ENCODE measurements at regions of chr2 and their contacts with region 1.

Region 1: GRCh38 chr2:101463891-101464641 is 10.8 kb downstream of the RFX8 start:
- DNase-seq: peak in 1 of 2 donors; percentile 66
- H3K4me3 ChIP-seq: no peak overlapping the region
- H3K27ac ChIP-seq: peak overlapping the region; percentile 18 to 56
- H3K4me1 ChIP-seq: peaks cover 0 to 14% of the 10 kb centered on the region in 2 donors
- H3K27me3 ChIP-seq: no peaks in the 10 kb centered on the region
- CTCF ChIP-seq: no peak

Region 2: DNA sequence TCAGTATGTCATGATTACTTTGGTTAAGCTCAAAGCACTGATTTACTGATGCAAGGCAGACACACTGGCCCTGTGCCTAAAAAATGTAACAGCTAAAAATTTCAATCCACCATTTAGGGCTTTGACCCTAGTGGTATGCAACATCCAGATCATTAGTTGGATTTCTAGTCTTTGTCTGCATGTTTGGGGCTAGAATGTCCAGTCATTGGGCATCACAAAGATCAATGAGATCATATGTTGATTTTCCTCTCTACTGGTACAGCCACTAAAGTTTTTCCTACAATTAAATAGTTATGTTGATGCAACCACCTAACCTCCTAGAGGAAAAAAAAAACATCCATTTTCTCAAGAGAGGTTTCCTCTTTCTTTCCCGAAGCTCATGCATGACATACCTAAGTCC is 1920.8 kb before region 1 on chr2:
- intact Hi-C with region 1: no loop called
- DNase-seq: no peak
- H3K4me3 ChIP-seq: no peak overlapping the region
- H3K27ac ChIP-seq: no peak overlapping the region
- H3K4me1 ChIP-seq: peaks cover 0 to 3% of the 10 kb centered on the region in 2 donors
- H3K27me3 ChIP-seq: no peaks in the 10 kb centered on the region
- CTCF ChIP-seq: no peak

Region 3: GRCh38 chr2:101360229-101360628 is 103.8 kb before region 1 on chr2:
- intact Hi-C with region 1: no loop called
- DNase-seq: peak in 1 of 2 donors; percentile 13
- H3K4me3 ChIP-seq: no peak overlapping the region
- H3K27ac ChIP-seq: no peak overlapping the region
- H3K4me1 ChIP-seq: no peaks in the 10 kb centered on the region
- H3K27me3 ChIP-seq: no peaks in the 10 kb centered on the region
- CTCF ChIP-seq: no peak

Region 4: GRCh38 chr2:101428422-101429176 is 35.5 kb before region 1 on chr2:
- intact Hi-C with region 1: loop called (anchors 5 kb)
- DNase-seq: no peak
- H3K4me3 ChIP-seq: no peak overlapping the region
- H3K27ac ChIP-seq: no peak overlapping the region
- H3K4me1 ChIP-seq: no peaks in the 10 kb centered on the region
- H3K27me3 ChIP-seq: no peaks in the 10 kb centered on the region
- CTCF ChIP-seq: no peak